Caco-2 (cell line): ENCODE measurements at regions of chr4 and their contacts with region 1.

Region 1: DNA sequence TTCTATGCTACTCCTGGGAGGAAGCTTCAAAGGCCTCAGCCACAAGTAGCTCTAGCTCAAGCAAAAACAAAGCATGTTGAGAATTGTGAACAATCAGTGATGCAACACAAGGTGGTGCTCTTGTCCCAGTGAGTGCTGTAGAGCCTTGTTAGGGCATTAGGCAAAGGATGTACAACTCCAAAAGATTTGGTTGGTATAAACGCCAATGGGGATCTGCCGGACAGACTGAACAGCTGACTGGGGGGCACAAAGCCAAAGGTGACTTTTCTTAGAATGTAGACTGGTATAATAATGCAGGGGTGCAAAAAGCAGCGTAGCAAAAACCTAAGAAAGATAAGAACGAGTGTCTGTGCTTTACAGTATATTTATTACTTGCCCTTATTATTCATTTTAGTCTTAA is 62.6 kb upstream of the ALB start:
- DNase-seq: peak; percentile 61 to 70
- H3K4me3 ChIP-seq: no peak overlapping the region
- H3K4me3 Mint-ChIP-seq: no peak overlapping the region
- H3K27ac Mint-ChIP-seq: no peak overlapping the region
- H3K4me1 ChIP-seq: peaks cover 22% of the 10 kb centered on the region
- H3K4me1 Mint-ChIP-seq: peaks cover 23% of the 10 kb centered on the region
- H3K27me3 ChIP-seq: no peaks in the 10 kb centered on the region
- H3K27me3 Mint-ChIP-seq: no peaks in the 10 kb centered on the region
- CTCF ChIP-seq: peak; percentile 50 to 61

Region 2: GRCh38 chr4:72900952-72901351 is 440.5 kb before region 1 on chr4:
- CTCF ChIA-PET with region 1: no interaction called
- POLR2A ChIA-PET with region 1: no interaction called
- intact Hi-C with region 1: no loop called
- DNase-seq: no peak
- H3K4me3 ChIP-seq: no peak overlapping the region
- H3K4me3 Mint-ChIP-seq: no peak overlapping the region
- H3K27ac Mint-ChIP-seq: no peak overlapping the region
- H3K4me1 ChIP-seq: peaks cover 28% of the 10 kb centered on the region
- H3K4me1 Mint-ChIP-seq: peaks cover 13% of the 10 kb centered on the region
- H3K27me3 ChIP-seq: no peaks in the 10 kb centered on the region
- H3K27me3 Mint-ChIP-seq: no peaks in the 10 kb centered on the region
- CTCF ChIP-seq: no peak

Region 3: GRCh38 chr4:73434311-73434710 is 92.9 kb after region 1 on chr4:
- CTCF ChIA-PET with region 1: interaction called, 11 read pairs
- POLR2A ChIA-PET with region 1: no interaction called
- intact Hi-C with region 1: loop called (anchors 1 kb)
- DNase-seq: no peak
- H3K4me3 ChIP-seq: no peak overlapping the region
- H3K4me3 Mint-ChIP-seq: no peak overlapping the region
- H3K27ac Mint-ChIP-seq: no peak overlapping the region
- H3K4me1 ChIP-seq: peaks cover 50% of the 10 kb centered on the region
- H3K4me1 Mint-ChIP-seq: peaks cover 31% of the 10 kb centered on the region
- H3K27me3 ChIP-seq: no peaks in the 10 kb centered on the region
- H3K27me3 Mint-ChIP-seq: no peaks in the 10 kb centered on the region
- CTCF ChIP-seq: peak in 1 of 2 experiments; percentile 32

Region 4: DNA sequence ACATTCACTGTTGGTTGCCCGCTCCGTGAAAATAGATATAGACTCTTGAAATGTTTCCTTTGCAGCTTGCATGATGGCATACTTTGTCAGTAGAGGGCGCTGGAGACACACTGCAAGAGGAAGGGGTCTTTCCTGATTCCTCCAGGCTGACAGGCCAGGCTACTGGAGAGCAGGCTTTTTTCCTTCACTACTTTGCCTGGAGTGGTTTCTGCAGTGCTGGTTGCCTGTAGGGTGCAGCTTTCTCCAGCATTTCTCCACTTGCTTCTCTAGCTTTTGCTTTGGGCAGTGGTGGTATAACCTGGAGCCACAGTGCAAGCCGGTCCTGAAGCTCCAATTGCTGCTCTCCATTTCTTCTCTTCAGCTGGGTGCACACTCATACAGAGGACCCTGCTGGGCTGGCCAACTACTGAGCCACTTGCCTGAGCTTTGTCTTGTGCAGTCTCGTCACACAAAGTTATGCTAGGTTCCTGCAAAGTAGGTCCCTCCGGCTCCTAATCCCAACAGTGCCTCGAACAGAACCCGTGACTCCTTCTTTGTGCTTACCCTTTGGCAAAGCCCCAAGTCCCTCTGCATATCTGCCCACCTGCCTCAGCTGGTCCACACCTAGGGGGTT is 232.4 kb after region 1 on chr4:
- CTCF ChIA-PET with region 1: interaction called, 7 read pairs
- POLR2A ChIA-PET with region 1: no interaction called
- intact Hi-C with region 1: loop called (anchors 2 kb)
- DNase-seq: peak; percentile 80
- H3K4me3 ChIP-seq: no peak overlapping the region
- H3K4me3 Mint-ChIP-seq: no peak overlapping the region
- H3K27ac Mint-ChIP-seq: no peak overlapping the region
- H3K4me1 ChIP-seq: no peaks in the 10 kb centered on the region
- H3K4me1 Mint-ChIP-seq: no peaks in the 10 kb centered on the region
- H3K27me3 ChIP-seq: no peaks in the 10 kb centered on the region
- H3K27me3 Mint-ChIP-seq: no peaks in the 10 kb centered on the region
- CTCF ChIP-seq: peak; percentile 83 to 86

Region 5: GRCh38 chr4:73653695-73654106 is 312.2 kb after region 1 on chr4:
- CTCF ChIA-PET with region 1: interaction called, 6 read pairs
- POLR2A ChIA-PET with region 1: no interaction called
- intact Hi-C with region 1: loop called (anchors 1 kb)
- DNase-seq: peak in 1 of 2 experiments; percentile 28
- H3K4me3 ChIP-seq: no peak overlapping the region
- H3K4me3 Mint-ChIP-seq: no peak overlapping the region
- H3K27ac Mint-ChIP-seq: no peak overlapping the region
- H3K4me1 ChIP-seq: no peaks in the 10 kb centered on the region
- H3K4me1 Mint-ChIP-seq: no peaks in the 10 kb centered on the region
- H3K27me3 ChIP-seq: no peaks in the 10 kb centered on the region
- H3K27me3 Mint-ChIP-seq: no peaks in the 10 kb centered on the region
- CTCF ChIP-seq: peak; percentile 46 to 63